ENCODE measurements at regions of chr1 and their contacts with region 1.

Region 1: DNA sequence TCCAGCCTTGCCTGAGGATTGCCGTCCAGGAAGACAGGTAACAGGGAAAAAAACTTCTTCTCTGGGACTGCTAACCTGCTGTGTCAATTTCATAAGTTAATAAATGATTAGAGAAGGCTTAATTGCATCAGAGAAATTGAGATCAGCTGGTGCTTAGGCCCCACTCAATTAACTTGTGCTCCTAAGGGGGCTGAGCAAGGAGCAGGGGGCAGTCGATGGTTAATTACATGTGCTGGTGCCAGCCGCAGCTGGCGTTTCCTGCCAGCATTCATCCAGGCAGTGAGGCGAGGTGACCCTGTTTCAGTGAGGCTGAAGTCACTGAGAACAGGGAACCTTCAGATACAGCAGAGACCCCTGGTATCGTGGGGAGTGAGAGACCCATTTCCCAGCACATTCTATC is 60.0 kb downstream of the FAM163A start:
- DNase-seq: no peak
- H3K4me3 ChIP-seq: no peak overlapping the region
- H3K27ac ChIP-seq: no peak overlapping the region
- H3K4me1 ChIP-seq: no peaks in the 10 kb centered on the region
- H3K27me3 ChIP-seq: no peaks in the 10 kb centered on the region
- CTCF ChIP-seq: no peak

Region 2: DNA sequence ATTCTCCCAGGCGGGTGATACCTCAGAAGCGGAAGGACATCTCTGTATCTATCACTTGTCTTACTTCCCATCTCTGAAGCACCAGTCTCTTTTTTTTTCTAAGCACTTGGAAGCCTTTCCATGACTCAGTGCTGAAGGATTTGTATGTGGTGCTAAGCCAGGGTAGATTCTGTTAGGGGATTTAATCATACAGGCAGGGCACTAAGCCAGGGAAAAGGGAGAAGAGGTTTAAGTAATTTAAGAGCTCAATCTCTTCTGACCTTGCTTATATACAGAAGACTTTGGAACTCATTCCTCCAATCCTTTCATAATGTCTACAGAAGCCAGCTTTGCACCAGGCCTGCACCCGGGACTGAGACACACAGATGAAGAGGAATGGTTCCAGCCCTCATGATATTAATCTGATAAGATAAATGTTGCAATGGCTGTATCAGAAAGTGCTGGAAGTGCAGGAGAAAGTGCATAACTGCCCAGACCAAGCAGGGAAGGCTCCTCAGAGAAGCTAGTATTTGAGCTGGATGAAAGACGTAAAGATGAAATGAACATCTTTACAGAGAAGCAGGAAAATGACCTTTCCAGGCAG is 49.0 kb before region 1 on chr1:
- CTCF ChIA-PET with region 1: no interaction called
- dilution Hi-C with region 1: loop called (anchors 5 kb)
- in situ Hi-C with region 1: no loop called
- intact Hi-C with region 1: no loop called
- DNase-seq: peak; percentile 53
- H3K4me3 ChIP-seq: no peak overlapping the region
- H3K27ac ChIP-seq: no peak overlapping the region
- H3K4me1 ChIP-seq: no peaks in the 10 kb centered on the region
- H3K27me3 ChIP-seq: peaks cover 3% of the 10 kb centered on the region
- CTCF ChIP-seq: no peak